Common myeloid progenitor, CD34-positive (primary cell): ENCODE measurements at regions of chr16 and their contacts with region 1.

Region 1: GRCh38 chr16:80526425-80527061 is 14.2 kb upstream of the DYNLRB2 start:
- DNase-seq: peak; percentile 68 to 86 (median 84)
- H3K4me3 ChIP-seq: peak overlapping the region in 1 of 7 experiments; percentile 29
- H3K27ac ChIP-seq: no peak overlapping the region
- H3K4me1 ChIP-seq: peaks cover 0 to 2% (median 0%) of the 10 kb centered on the region in 4 experiments
- H3K27me3 ChIP-seq: peaks cover 0 to 3% (median 0%) of the 10 kb centered on the region in 5 experiments

Region 2: DNA sequence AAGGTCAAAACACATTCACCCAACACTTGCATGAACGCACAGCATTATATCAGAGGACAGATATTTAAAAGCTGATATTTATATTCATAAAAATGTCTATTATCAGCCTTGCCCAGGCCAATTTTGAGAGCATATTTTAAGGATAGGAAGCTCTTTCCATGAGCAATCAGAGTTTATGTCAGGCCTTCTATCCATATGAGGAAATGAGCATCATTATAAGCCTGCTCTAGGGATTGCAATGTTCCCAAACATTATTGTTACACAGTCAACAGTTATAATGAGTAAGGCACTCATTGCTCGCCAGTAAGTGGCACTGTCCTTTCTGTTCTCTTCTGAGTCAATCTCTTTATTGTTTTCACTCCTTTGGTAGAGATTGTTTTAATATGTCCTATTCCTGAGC is 23.4 kb before region 1 on chr16:
- CTCF ChIA-PET with region 1: interaction called, 11 read pairs
- POLR2A ChIA-PET with region 1: no interaction called
- DNase-seq: no peak
- H3K4me3 ChIP-seq: no peak overlapping the region
- H3K27ac ChIP-seq: no peak overlapping the region
- H3K4me1 ChIP-seq: no peaks in the 10 kb centered on the region
- H3K27me3 ChIP-seq: peaks cover 0 to 8% (median 0%) of the 10 kb centered on the region in 5 experiments

Region 3: GRCh38 chr16:80515374-80515773 is 11.2 kb before region 1 on chr16:
- CTCF ChIA-PET with region 1: interaction called, 12 read pairs
- POLR2A ChIA-PET with region 1: no interaction called
- DNase-seq: no peak
- H3K4me3 ChIP-seq: no peak overlapping the region
- H3K27ac ChIP-seq: no peak overlapping the region
- H3K4me1 ChIP-seq: peaks cover 0 to 8% (median 5%) of the 10 kb centered on the region in 4 experiments
- H3K27me3 ChIP-seq: no peaks in the 10 kb centered on the region

Region 4: DNA sequence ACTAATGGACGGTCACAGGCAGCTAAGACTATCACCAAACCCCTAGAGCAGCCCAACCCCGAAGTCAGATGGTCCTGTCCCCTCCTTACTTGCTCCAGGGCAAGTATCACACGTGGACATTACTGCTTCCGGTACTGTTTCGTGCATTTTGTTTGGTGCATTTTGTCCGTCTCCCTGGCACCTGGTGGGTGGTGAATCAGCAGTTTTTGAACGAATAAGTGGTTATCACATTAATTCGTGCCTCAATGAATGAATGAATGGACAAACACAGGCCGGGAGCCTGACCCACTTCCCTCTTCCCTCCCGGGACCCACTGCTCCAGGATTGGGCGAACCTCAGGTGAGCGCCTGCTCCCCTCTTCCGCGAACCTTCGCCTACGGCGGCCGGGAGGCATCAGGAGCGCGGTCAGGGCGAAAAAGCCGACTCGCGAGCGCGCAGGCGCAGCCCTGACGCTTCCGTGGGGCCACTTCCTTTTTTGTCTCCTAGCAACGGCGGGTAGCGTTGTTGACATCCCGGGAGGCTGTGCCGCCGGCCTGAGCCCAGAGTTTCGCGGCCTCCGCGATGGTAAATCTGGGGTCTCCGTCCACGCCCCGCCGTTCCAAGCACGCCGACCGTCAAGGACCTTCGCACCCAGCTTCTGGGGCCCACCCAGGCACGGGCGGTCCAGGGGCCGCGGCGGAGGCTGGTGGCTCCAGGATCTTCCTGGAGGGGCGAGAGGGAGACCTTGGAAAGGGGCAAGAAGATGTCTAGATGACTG is 14.2 kb after region 1 on chr16 and contains the start of gene DYNLRB2:
- CTCF ChIA-PET with region 1: interaction called, 22 read pairs
- POLR2A ChIA-PET with region 1: no interaction called
- DNase-seq: peak; percentile 94 to 96 (median 95)
- H3K4me3 ChIP-seq: peak within 1 kb of the TSS; percentile 55 to 84 (median 67)
- H3K27ac ChIP-seq: peak within 1 kb of the TSS; percentile 66 to 82
- H3K4me1 ChIP-seq: peaks cover 0 to 10% (median 3%) of the 10 kb centered on the region in 4 experiments
- H3K27me3 ChIP-seq: peaks cover 0 to 5% (median 1%) of the 10 kb centered on the region in 5 experiments

Region 5: DNA sequence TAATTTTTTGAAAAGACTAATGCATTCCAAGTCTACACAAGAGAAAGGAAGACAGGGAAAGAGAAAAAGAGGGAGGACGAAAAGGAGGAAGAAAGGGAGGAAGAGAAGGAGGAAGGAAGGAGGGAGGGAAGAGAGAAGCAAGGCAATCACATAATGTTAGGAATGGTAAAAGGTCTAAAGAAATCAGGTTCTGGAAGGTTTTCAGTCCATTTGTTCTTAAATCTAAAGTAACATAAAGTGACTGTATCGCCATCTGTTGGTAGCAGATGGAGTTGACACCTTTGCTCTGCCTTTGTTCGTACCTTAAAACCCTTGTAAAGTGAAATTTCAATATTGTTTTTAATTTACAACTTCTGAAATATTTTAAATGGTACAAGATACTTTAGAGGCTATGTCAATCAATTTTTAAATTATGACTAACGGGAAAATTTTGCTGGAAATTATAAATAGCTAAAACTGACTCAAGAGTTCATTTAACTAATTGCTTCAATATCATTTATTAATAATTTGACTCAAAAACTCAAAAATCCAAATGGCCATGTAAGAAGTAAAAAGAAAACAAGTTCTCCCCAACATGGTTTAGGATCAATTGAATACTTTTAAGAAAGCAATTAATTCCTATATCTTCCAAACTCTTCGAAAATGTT is 298.3 kb after region 1 on chr16:
- CTCF ChIA-PET with region 1: interaction called, 44 read pairs
- POLR2A ChIA-PET with region 1: no interaction called
- DNase-seq: peak; percentile 66 to 86 (median 82)
- H3K4me3 ChIP-seq: no peak overlapping the region
- H3K27ac ChIP-seq: no peak overlapping the region
- H3K4me1 ChIP-seq: peaks cover 0 to 3% (median 0%) of the 10 kb centered on the region in 4 experiments
- H3K27me3 ChIP-seq: no peaks in the 10 kb centered on the region

Region 6: GRCh38 chr16:80852261-80852872 is 325.8 kb after region 1 on chr16:
- CTCF ChIA-PET with region 1: interaction called, 12 read pairs
- POLR2A ChIA-PET with region 1: no interaction called
- DNase-seq: peak; percentile 31 to 63 (median 55)
- H3K4me3 ChIP-seq: no peak overlapping the region
- H3K27ac ChIP-seq: no peak overlapping the region
- H3K4me1 ChIP-seq: no peaks in the 10 kb centered on the region
- H3K27me3 ChIP-seq: no peaks in the 10 kb centered on the region